ENCODE measurements at regions of chr17 and their contacts with region 1.

Region 1: GRCh38 chr17:60142872-60143499 is 6.8 kb upstream of the CA4 start:
- DNase-seq: peak; percentile 80 to 84
- H3K4me3 ChIP-seq: peak overlapping the region; percentile 49; the same call in 1 of the 2 replicates
- H3K27ac ChIP-seq: no peak overlapping the region
- H3K4me1 ChIP-seq: peaks cover 10% of the 10 kb centered on the region
- H3K27me3 ChIP-seq: no peaks in the 10 kb centered on the region
- CTCF ChIP-seq: peak; percentile 82

Region 2: DNA sequence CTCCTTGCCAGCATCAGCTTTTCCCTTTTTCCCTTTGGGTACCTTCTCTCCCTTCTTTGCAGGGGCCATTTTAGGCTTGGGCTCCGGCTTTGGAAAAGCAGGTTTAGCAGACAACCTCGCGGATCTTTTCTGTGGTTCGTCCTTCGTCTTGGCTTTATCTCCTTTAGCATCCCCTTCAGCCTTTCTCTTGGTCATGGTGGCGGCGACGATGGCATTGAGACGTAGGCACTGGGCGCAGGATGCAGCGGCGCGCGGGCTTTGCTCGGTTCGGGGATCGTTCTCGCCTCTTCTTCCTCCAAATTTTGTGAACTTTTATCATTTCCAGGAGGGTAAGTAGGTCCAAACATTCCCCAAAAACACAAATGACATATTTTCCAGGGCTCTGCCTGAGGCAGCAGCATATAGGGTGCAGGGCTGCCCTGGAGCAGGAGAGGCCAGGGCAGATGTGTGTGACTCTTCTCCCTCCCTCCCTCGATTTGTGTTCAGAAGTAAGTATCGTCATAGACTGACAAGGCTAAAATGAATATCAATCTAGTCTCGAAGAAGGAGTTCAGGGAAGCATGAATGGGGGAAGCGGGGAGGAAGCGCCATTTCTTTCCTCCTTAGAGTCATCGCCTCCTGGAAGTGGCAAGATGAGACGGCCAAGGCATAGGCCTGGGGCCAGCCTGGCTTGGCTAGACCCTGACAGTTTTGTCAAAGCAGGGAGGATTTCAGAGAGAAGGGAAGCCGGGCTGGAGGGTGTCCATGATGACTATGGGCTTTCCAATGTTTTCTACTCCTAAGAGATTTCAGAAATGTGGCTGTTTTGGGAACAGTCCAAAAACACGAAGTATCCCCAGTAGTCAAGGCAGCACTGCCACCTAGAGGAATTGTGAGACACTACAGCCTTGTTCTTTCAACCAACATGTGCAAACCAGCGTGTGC is 292.5 kb after region 1 on chr17:
- CTCF ChIA-PET with region 1: no interaction called
- POLR2A ChIA-PET with region 1: no interaction called
- intact Hi-C with region 1: loop called (anchors 1 kb)
- DNase-seq: peak; percentile 55 to 72
- H3K4me3 ChIP-seq: no peak overlapping the region
- H3K27ac ChIP-seq: no peak overlapping the region
- H3K4me1 ChIP-seq: no peaks in the 10 kb centered on the region
- H3K27me3 ChIP-seq: no peaks in the 10 kb centered on the region
- CTCF ChIP-seq: peak; percentile 98

Measured in PC-9 (cell line).